ENCODE measurements at regions of chr19 and their contacts with region 1.

Region 1: GRCh38 chr19:19366612-19367396 is 38.7 kb upstream of the GATAD2A start:
- DNase-seq: peak; percentile 75 to 82
- ATAC-seq: peak; percentile 79

Region 2: GRCh38 chr19:19410275-19411192 is 43.7 kb after region 1 on chr19:
- intact Hi-C with region 1: no loop called
- DNase-seq: no peak
- ATAC-seq: no peak

Region 3: DNA sequence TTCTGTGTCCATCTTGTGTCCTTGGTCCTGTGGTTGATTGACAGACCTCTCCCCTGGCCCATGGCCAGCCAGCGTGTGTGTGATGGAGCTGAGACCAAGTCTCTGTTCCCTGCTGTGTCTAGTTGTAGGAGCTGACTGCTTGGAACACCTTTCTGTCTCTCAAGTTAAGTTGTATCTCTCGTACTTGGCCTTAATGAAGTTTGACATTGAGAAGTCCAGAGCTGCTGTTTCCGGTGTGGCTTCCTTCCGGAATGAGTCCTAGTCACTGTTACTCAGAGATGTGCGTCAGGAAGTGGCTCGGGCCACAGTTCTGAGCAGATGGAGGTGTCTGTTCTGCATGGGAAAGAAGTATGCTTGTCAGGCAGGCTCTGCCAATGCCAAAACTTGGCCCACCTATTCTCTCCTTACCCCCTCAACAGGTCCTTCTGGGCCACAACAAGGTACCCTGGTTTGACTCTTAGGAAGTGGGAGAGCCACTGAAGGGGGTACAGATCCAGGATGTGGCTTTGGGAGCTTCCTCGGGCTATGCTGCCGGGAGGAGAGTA is 93.0 kb after region 1 on chr19:
- intact Hi-C with region 1: no loop called
- DNase-seq: peak in 1 of 2 donors; percentile 40
- ATAC-seq: no peak

Region 4: DNA sequence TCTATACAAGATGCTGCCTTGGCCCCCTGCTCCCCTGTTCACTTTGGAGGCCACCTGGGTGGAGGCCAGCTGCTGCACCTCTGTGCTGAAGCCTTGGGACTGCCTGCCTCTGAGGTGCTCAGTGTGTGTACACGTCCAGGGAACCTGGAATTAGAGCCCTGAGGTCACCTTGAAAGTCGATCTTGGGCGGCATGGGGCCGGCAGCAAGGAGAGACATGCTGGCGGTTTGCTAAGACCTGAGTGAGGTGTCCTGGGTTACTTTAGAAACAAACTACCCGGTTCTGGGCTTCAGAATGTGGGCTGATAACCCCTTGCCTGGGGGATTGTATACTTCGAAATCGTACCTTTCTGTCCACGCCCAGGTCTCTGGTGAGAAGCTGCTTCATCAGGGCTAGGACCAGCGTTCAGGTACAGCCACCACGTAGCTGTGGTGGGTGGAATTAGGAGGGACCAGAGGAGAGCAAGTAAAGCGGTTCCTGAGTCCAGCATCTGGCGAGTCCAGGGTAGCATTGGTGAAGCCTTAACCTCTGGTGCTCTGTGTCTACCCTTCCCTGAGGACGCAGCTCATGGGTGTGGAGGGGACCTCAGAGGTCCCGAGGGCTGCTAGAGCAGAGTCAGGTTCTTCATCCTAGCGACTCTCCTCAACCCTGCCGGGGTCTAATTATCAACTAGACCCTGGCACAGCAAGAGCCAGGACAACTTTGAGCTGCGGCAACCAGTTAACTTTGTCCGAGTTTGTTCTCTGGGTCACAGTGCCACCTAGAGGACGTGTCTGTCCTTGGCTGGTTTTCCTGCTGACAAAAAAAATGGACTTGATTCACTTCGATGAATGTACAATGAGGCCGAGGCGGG is 123.2 kb after region 1 on chr19:
- intact Hi-C with region 1: loop called in 1 of 2 experiments (anchors 5 kb)
- DNase-seq: peak; percentile 67 to 81
- ATAC-seq: peak; percentile 44